ENCODE measurements at regions of chr1 and their contacts with region 1.

Region 1: GRCh38 chr1:235211517-235211916 is 50.5 kb upstream of the RBM34 start:
- DNase-seq: no peak
- H3K4me3 Mint-ChIP-seq: no peak overlapping the region
- H3K27ac Mint-ChIP-seq: peak overlapping the region; percentile 57
- H3K4me1 Mint-ChIP-seq: no peaks in the 10 kb centered on the region
- H3K27me3 Mint-ChIP-seq: no peaks in the 10 kb centered on the region
- CTCF ChIP-seq: no peak

Region 2: GRCh38 chr1:235011599-235012435 is 199.7 kb before region 1 on chr1:
- CTCF ChIA-PET with region 1: no interaction called
- POLR2A ChIA-PET with region 1: no interaction called
- intact Hi-C with region 1: no loop called
- DNase-seq: peak; percentile 99
- H3K4me3 Mint-ChIP-seq: peak overlapping the region; percentile 47
- H3K27ac Mint-ChIP-seq: peak overlapping the region; percentile 92
- H3K4me1 Mint-ChIP-seq: peaks cover 14% of the 10 kb centered on the region
- H3K27me3 Mint-ChIP-seq: no peaks in the 10 kb centered on the region
- CTCF ChIP-seq: no peak

Region 3: DNA sequence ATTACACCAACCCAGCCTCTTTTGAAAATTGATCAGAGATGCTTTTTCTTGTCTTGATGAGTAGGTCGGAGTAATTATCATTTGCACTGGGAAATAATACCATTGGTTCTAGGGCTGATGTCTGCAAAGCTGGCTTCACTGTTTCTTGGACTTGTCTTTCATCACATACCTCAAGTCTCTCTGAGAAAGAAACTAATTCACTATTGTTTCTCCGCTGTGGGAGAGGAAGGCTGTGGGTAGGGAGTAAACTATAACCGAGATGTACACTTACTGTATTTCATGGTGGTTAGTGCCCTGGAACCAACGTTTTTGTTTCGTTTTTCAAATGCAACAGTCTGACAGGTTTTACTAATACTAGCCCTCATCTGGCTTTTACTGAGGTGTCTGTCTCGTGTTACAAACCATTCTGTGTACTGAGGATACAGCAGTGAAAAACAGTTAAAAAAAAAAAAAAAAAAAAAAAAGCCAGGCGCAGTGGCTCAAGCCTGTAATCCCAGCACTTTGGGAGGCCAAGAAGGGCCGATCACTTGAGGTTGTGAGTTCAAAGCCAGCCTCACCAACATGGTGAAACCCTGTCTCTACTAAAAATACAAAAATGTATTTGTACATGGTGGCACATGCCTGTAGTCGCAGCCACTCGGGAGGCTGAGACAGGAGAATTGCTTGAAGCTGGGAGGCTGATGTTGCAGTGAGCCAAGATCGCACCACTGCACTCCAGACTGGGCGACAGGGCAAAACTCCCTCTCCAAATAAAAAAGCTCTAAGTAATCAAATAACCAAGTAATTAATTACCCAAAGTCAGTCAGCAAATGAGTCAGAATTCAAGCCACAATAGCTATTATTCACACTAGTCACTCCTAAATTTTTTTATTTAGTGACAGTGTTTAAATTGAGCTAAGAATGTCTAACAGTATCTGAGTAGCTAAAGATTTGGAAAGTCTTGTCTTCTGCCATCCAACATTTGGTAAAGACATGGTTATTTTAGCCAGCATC is 106.2 kb before region 1 on chr1:
- CTCF ChIA-PET with region 1: no interaction called
- POLR2A ChIA-PET with region 1: no interaction called
- intact Hi-C with region 1: no loop called
- DNase-seq: peak; percentile 51
- H3K4me3 Mint-ChIP-seq: peak overlapping the region; percentile 59
- H3K27ac Mint-ChIP-seq: peak overlapping the region; percentile 33
- H3K4me1 Mint-ChIP-seq: peaks cover 29% of the 10 kb centered on the region
- H3K27me3 Mint-ChIP-seq: no peaks in the 10 kb centered on the region
- CTCF ChIP-seq: no peak

Region 4: GRCh38 chr1:235199441-235199840 is 12.1 kb before region 1 on chr1:
- CTCF ChIA-PET with region 1: interaction called, 3 read pairs
- POLR2A ChIA-PET with region 1: interaction called, 18 read pairs
- intact Hi-C with region 1: no loop called
- DNase-seq: peak; percentile 44
- H3K4me3 Mint-ChIP-seq: no peak overlapping the region
- H3K27ac Mint-ChIP-seq: peak overlapping the region; percentile 13
- H3K4me1 Mint-ChIP-seq: peaks cover 9% of the 10 kb centered on the region
- H3K27me3 Mint-ChIP-seq: no peaks in the 10 kb centered on the region
- CTCF ChIP-seq: peak; percentile 31

Measured in MCF 10A (cell line).